Activated B cell treated with CpG ODN at 0.5 μM for 24 hours (primary cell): ENCODE measurements at regions of chr5 and their contacts with region 1.

Region 1: GRCh38 chr5:126354012-126354857 is 69.0 kb upstream of the GRAMD2B start:
- DNase-seq: no peak
- ATAC-seq: peak; percentile 42
- H3K4me3 Mint-ChIP-seq: no peak overlapping the region
- H3K27ac Mint-ChIP-seq: no peak overlapping the region
- H3K4me1 Mint-ChIP-seq: peaks cover 4% of the 10 kb centered on the region
- H3K27me3 Mint-ChIP-seq: peaks cover 21% of the 10 kb centered on the region
- CTCF ChIP-seq: no peak

Region 2: GRCh38 chr5:126166368-126166767 is 187.9 kb before region 1 on chr5:
- CTCF ChIA-PET with region 1: no interaction called
- POLR2A ChIA-PET with region 1: no interaction called
- intact Hi-C with region 1: no loop called
- DNase-seq: no peak
- ATAC-seq: no peak
- H3K4me3 Mint-ChIP-seq: no peak overlapping the region
- H3K27ac Mint-ChIP-seq: no peak overlapping the region
- H3K4me1 Mint-ChIP-seq: no peaks in the 10 kb centered on the region
- H3K27me3 Mint-ChIP-seq: no peaks in the 10 kb centered on the region
- CTCF ChIP-seq: no peak

Region 3: DNA sequence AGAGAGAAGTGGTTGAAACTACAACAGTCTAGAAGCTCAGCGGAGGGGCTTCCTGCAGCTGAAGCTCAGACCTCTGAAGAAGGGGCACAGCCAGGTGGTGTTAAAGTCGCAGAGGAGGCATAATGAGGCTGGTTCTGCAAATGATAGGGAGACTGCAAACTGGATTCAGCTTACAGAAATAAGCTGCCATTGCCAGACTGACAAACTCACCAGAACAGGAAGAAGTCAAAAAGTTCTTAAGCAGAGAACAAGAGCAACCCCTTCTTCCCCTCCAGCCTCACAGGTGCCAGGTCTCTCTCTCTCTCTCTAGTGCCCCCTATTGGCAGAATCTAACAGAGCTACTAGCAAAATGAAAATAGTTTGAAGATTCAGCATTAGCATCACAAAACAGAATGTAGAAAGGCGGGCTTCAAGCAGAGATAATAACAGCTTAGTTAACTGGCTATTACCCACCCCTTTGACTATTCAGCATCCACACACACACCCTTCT is 145.7 kb after region 1 on chr5:
- CTCF ChIA-PET with region 1: interaction called, 4 read pairs
- POLR2A ChIA-PET with region 1: no interaction called
- intact Hi-C with region 1: loop called (anchors 2 kb)
- DNase-seq: no peak
- ATAC-seq: no peak
- H3K4me3 Mint-ChIP-seq: no peak overlapping the region
- H3K27ac Mint-ChIP-seq: no peak overlapping the region
- H3K4me1 Mint-ChIP-seq: no peaks in the 10 kb centered on the region
- H3K27me3 Mint-ChIP-seq: peaks cover 2% of the 10 kb centered on the region
- CTCF ChIP-seq: no peak

Region 4: DNA sequence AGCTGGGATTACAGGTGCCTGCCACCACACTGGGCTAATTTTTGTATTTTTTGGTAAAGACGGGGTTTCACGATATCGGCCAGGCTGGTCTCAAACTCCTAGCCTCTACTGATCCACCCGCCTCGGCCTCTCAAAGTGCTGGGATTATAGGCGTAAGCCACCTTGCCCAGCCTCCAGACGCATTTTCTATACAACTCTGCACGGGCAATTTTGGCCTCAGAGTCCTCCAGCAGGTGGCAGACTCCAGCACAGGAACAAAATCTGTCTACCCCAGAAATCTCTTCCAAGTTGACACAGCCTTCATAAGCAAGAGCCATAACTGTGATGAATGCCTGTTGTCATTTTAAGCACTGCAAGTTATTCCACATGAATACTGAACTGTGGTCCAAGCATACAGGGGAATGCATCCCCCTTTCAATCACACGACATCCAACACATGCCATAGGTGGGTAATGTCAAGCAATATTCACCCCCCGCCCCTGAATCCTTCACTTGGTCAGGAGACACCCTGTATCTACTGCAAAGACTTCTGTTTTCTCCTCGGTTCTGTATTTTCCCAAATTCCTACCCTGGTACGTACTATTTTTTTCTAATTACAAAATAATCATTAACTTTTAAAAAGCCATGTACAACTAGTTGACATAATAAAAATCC is 190.0 kb after region 1 on chr5:
- CTCF ChIA-PET with region 1: interaction called, 5 read pairs
- POLR2A ChIA-PET with region 1: no interaction called
- intact Hi-C with region 1: loop called (anchors 1 kb)
- DNase-seq: no peak
- ATAC-seq: no peak
- H3K4me3 Mint-ChIP-seq: no peak overlapping the region
- H3K27ac Mint-ChIP-seq: no peak overlapping the region
- H3K4me1 Mint-ChIP-seq: no peaks in the 10 kb centered on the region
- H3K27me3 Mint-ChIP-seq: no peaks in the 10 kb centered on the region
- CTCF ChIP-seq: peak; percentile 45

Region 5: GRCh38 chr5:126624534-126624933 is 270.3 kb after region 1 on chr5:
- CTCF ChIA-PET with region 1: no interaction called
- POLR2A ChIA-PET with region 1: no interaction called
- intact Hi-C with region 1: no loop called
- DNase-seq: no peak
- ATAC-seq: no peak
- H3K4me3 Mint-ChIP-seq: no peak overlapping the region
- H3K27ac Mint-ChIP-seq: no peak overlapping the region
- H3K4me1 Mint-ChIP-seq: no peaks in the 10 kb centered on the region
- H3K27me3 Mint-ChIP-seq: no peaks in the 10 kb centered on the region
- CTCF ChIP-seq: no peak